GM12878 (cell line): ENCODE measurements at regions of chr13 and their contacts with region 1.

Region 1: GRCh38 chr13:31824705-31825517 is 85.6 kb downstream of the RXFP2 start:
- DNase-seq: peak; percentile 13
- ATAC-seq: peak; percentile 71
- H3K4me3 ChIP-seq: no peak overlapping the region
- H3K27ac ChIP-seq: no peak overlapping the region
- H3K4me1 ChIP-seq: no peaks in the 10 kb centered on the region
- H3K27me3 ChIP-seq: no peaks in the 10 kb centered on the region
- CTCF ChIP-seq: peak; percentile 16 to 58 (median 17); a peak in 4 of 6 replicates
- EP300 ChIP-seq: no peak
- POLR2A ChIP-seq: no peak
- RAD21 ChIP-seq: peak; percentile 41

Region 2: DNA sequence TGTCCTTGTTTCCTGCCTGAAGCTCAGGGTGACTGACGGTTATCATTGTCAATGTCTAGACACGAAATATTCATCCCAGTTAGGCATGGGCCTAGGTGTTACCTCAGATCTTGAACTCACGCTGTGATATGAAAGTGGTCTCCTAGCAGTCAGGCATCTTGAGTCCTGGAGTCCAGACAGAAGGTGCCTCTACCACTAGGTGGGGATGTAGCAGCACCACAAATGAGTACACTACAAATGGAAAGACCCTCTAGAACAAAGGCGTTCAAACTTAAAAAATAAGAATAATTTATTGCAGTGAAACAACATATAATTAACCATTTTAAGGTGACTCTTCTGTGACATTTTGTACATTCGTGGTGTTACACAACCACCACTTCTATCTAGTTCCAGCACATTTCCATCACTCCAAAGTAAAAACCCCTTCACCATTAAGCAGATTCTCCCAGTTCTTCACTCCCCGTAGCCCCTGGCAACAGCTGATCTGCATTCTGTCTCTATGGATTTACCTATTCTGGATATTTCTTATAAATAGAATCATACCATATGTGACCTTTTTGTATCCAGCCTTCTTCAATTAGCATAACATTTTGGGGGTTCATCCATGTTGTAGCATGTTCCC is 194.8 kb after region 1 on chr13:
- CTCF ChIA-PET with region 1: no interaction called
- POLR2A ChIA-PET with region 1: no interaction called
- RAD21 ChIA-PET with region 1: no interaction called
- SMC1A ChIA-PET with region 1: no interaction called
- in situ Hi-C with region 1: no loop called
- intact Hi-C with region 1: loop called (anchors 10 kb)
- DNase-seq: peak; percentile 17
- ATAC-seq: peak; percentile 93
- H3K4me3 ChIP-seq: no peak overlapping the region
- H3K27ac ChIP-seq: no peak overlapping the region
- H3K4me1 ChIP-seq: no peaks in the 10 kb centered on the region; the same call in 1 of the 2 replicates
- H3K27me3 ChIP-seq: no peaks in the 10 kb centered on the region
- CTCF ChIP-seq: peak; percentile 63 to 77 (median 76)
- EP300 ChIP-seq: no peak
- POLR2A ChIP-seq: no peak
- RAD21 ChIP-seq: peak; percentile 89